WTC11 (cell line): ENCODE measurements at regions of chr14 and their contacts with region 1.

Region 1: DNA sequence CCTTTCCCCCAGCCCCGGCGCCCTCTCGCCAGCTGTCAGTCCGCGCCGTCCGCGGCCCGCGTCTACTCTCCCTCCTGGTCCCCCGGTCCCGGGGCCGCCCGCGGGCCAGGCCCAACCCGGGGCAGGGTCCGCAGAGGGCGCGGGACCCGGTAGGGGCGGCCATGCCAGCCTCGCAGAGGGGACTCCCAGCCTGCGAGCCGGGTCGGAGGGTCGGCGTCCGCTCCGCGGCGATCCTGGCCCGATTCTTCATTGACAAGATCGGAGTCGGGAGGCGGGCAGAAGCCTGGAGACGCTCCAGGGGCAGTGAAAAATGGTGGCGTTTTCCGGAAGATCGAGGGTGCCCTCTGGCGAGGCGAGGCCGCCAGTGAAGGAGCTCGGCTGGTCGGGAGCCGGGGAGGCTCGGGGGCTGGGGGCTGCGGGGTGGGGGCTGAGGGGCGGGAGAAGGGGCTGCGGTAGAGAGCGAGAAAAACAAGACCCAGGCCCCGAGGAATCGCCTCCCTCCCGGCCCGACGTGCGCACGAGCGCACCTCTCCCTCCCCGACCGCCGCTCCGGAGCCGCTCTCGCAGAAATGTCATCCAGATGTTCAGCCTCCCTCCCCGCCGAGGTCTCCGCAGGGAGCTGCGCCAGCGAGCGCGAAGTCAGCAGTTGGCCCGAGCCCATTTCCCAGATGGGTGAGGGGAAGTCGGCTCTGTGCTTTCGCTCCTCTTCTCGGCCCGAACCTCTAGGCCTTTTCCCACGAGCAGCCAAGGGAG is 647 bp upstream of the TGFB3 start:
- DNase-seq: peak; percentile 87
- ATAC-seq: peak; percentile 65
- H3K4me3 Mint-ChIP-seq: peak overlapping the region; percentile 84
- H3K27ac Mint-ChIP-seq: no peak overlapping the region
- H3K4me1 Mint-ChIP-seq: peaks cover 42% of the 10 kb centered on the region
- H3K27me3 Mint-ChIP-seq: peaks cover 39% of the 10 kb centered on the region
- CTCF ChIP-seq: peak; percentile 34; the same call in 1 of the 2 replicates

Region 2: DNA sequence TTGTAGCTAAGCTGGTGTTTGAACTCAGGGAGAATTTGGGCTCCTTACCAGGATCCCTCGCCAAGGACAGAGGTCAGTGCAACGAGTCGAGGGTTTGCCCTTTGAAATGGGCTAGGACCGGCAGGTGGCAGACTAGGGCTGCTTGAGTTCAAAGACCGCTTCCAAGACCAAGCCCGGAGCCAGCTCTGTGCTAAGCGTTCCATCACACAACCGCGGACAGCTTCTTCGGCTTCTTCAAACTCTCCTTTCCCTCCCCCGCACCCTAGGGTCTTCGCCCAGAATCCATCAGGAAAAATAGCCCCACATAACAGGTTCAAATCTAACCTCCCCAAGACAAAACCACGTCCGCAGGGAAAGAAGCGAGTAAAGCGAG is 404.7 kb before region 1 on chr14:
- CTCF ChIA-PET with region 1: interaction called, 15 read pairs
- POLR2A ChIA-PET with region 1: no interaction called
- DNase-seq: peak; percentile 87
- ATAC-seq: peak; percentile 92
- H3K4me3 Mint-ChIP-seq: no peak overlapping the region; the same call in 1 of the 2 replicates
- H3K27ac Mint-ChIP-seq: peak overlapping the region; percentile 78
- H3K4me1 Mint-ChIP-seq: no peaks in the 10 kb centered on the region; the same call in 1 of the 2 replicates
- H3K27me3 Mint-ChIP-seq: no peaks in the 10 kb centered on the region; the same call in none of the 2 replicates
- CTCF ChIP-seq: no peak

Region 3: GRCh38 chr14:75709207-75709812 is 273.1 kb before region 1 on chr14:
- CTCF ChIA-PET with region 1: interaction called, 98 read pairs
- POLR2A ChIA-PET with region 1: no interaction called
- DNase-seq: peak; percentile 72
- ATAC-seq: peak; percentile 74
- H3K4me3 Mint-ChIP-seq: no peak overlapping the region
- H3K27ac Mint-ChIP-seq: peak overlapping the region; percentile 73; the same call in 1 of the 2 replicates
- H3K4me1 Mint-ChIP-seq: peaks cover 14% of the 10 kb centered on the region
- H3K27me3 Mint-ChIP-seq: no peaks in the 10 kb centered on the region
- CTCF ChIP-seq: peak; percentile 67

Region 4: GRCh38 chr14:75879031-75879430 is 103.4 kb before region 1 on chr14:
- CTCF ChIA-PET with region 1: interaction called, 12 read pairs
- POLR2A ChIA-PET with region 1: no interaction called
- DNase-seq: no peak
- ATAC-seq: no peak
- H3K4me3 Mint-ChIP-seq: no peak overlapping the region
- H3K27ac Mint-ChIP-seq: no peak overlapping the region
- H3K4me1 Mint-ChIP-seq: peaks cover 18% of the 10 kb centered on the region
- H3K27me3 Mint-ChIP-seq: no peaks in the 10 kb centered on the region
- CTCF ChIP-seq: no peak

Region 5: DNA sequence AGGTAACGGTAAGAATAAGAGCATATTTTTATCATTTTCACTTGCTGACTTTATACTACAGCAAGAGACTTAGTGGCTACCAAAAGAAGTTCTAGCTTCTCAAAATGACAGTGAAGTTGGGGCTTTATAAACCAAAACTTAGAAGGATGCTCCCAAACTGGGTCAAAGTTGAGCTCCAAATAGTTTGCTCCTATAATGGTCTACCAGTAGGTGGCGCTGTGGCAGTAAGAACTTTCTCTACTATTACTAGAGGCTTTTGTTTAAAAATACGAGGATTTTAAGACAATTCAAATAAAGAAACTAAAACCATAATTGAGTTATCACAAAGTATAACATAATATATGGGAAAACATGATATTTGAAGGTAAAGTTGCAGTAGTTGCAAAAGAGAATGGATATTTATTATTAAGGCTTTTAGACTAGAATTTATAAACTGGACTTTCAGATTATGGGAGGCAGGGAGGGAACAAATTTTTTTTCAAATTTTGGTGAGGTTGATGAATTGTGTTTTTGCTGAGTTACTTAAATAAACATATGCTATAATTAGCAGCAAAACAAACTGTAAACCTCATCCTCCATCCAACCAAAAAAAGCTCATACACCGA is 75.7 kb before region 1 on chr14:
- CTCF ChIA-PET with region 1: interaction called, 307 read pairs
- POLR2A ChIA-PET with region 1: interaction called, 5 read pairs
- DNase-seq: peak; percentile 67
- ATAC-seq: peak; percentile 26; the same call in 1 of the 2 replicates
- H3K4me3 Mint-ChIP-seq: no peak overlapping the region
- H3K27ac Mint-ChIP-seq: no peak overlapping the region
- H3K4me1 Mint-ChIP-seq: peaks cover 9% of the 10 kb centered on the region
- H3K27me3 Mint-ChIP-seq: no peaks in the 10 kb centered on the region
- CTCF ChIP-seq: peak; percentile 71

Region 6: GRCh38 chr14:75941030-75941429 is 41.4 kb before region 1 on chr14:
- CTCF ChIA-PET with region 1: interaction called, 13 read pairs
- POLR2A ChIA-PET with region 1: interaction called, 3 read pairs
- DNase-seq: no peak
- ATAC-seq: no peak
- H3K4me3 Mint-ChIP-seq: no peak overlapping the region
- H3K27ac Mint-ChIP-seq: no peak overlapping the region; the same call in 1 of the 2 replicates
- H3K4me1 Mint-ChIP-seq: peaks cover 8% of the 10 kb centered on the region
- H3K27me3 Mint-ChIP-seq: no peaks in the 10 kb centered on the region
- CTCF ChIP-seq: no peak